HEK293 (cell line): ENCODE measurements at regions of chr11 and their contacts with region 1.

Region 1: DNA sequence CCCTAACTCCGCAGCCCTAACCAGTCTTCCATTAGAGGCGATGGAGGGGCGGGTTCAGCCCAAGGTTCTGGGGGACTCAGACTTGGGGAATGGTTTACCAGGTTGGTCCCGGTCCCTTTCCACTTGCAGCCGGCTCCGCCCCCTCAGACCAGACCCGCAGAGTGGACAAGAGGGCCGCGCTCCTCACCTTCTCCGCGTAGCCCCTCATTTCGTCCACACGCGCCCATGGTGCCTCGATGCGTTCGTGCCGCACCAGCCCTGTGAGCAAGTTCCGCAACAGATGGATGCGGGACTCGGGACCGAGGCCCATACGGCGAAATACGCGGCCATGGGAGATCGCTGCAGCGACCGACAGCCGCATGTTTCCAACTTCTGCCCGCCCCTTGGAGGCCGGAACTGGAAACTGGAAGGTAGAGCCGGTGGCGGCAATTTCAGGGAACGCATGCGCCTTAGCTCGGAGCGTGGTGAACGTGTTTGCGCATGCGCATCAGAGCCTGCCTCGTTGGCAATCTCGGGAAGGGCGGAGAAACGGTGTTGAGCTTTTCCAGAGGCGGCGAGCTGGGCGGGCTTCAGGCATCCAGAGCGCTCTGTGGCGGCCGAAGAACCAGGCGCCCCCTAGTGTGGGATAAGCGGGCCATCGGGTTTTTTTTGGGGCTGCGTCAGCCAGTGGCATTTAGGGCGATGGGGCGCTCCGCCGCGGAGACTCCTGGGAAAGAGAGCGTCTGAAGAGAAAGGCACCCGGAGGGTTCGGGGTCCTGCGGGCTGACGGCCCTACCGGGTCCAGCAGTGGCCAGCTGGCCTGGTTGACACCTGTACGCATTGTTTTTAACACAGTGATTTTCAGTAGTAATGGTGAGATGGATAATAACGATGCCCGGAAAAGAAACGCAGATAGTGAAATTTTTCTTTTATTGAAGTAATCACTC is at the start of gene MRPL17:
- H3K4me3 ChIP-seq: peak within 1 kb of the TSS; percentile 90
- H3K27ac ChIP-seq: peak within 1 kb of the TSS; percentile 70
- H3K4me1 ChIP-seq: no peaks in the 10 kb centered on the region
- CTCF ChIP-seq: peak; percentile 77

Region 2: DNA sequence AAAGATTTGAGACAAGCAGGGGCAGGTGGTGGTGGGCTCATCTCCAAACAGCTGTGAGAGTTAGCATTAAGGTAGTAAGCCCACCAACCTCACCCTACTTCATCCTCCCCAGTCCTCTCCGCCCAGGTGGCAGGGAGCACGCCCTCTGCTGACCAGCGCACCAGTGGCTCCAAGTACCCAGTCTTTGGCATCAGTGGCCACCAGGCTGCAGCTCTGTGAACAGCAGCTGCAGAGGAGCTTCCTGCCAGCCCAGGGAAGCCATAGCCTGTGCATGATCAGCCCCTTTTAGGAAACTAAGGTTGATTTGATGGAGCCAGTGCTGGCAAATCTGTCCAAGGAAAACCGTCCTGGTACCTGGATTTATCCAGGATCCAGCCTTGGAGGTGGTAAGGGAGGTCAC is 384.6 kb before region 1 on chr11:
- CTCF ChIA-PET with region 1: no interaction called
- POLR2A ChIA-PET with region 1: no interaction called
- H3K4me3 ChIP-seq: no peak overlapping the region
- H3K27ac ChIP-seq: no peak overlapping the region
- H3K4me1 ChIP-seq: no peaks in the 10 kb centered on the region
- CTCF ChIP-seq: peak; percentile 48

Region 3: GRCh38 chr11:6603287-6604080 is 79.7 kb before region 1 on chr11 and contains the starts of genes ILK and RRP8:
- CTCF ChIA-PET with region 1: interaction called, 16 read pairs
- POLR2A ChIA-PET with region 1: interaction called, 16 read pairs
- H3K4me3 ChIP-seq: peak within 1 kb of the TSS; percentile 92
- H3K27ac ChIP-seq: peak within 1 kb of the TSS; percentile 61
- H3K4me1 ChIP-seq: no peaks in the 10 kb centered on the region
- CTCF ChIP-seq: no peak; the same call in 1 of the 2 replicates

Region 4: GRCh38 chr11:6619004-6619745 is 64.0 kb before region 1 on chr11 and contains the start of gene TPP1:
- CTCF ChIA-PET with region 1: interaction called, 3 read pairs
- POLR2A ChIA-PET with region 1: interaction called, 14 read pairs
- H3K4me3 ChIP-seq: peak within 1 kb of the TSS; percentile 78
- H3K27ac ChIP-seq: no peak within 1 kb of the TSS
- H3K4me1 ChIP-seq: 0 out of 2 replicates have a peak, but pooled peaks cover 4% of the 10 kb centered on the region
- CTCF ChIP-seq: no peak

Region 5: GRCh38 chr11:6693342-6694228 is 10.4 kb after region 1 on chr11:
- CTCF ChIA-PET with region 1: interaction called, 17 read pairs
- POLR2A ChIA-PET with region 1: interaction called, 5 read pairs
- H3K4me3 ChIP-seq: no peak overlapping the region
- H3K27ac ChIP-seq: no peak overlapping the region
- H3K4me1 ChIP-seq: no peaks in the 10 kb centered on the region
- CTCF ChIP-seq: no peak

Region 6: GRCh38 chr11:6780829-6781228 is 97.6 kb after region 1 on chr11:
- CTCF ChIA-PET with region 1: no interaction called
- POLR2A ChIA-PET with region 1: no interaction called
- H3K4me3 ChIP-seq: no peak overlapping the region
- H3K27ac ChIP-seq: no peak overlapping the region
- H3K4me1 ChIP-seq: no peaks in the 10 kb centered on the region
- CTCF ChIP-seq: no peak

Region 7: DNA sequence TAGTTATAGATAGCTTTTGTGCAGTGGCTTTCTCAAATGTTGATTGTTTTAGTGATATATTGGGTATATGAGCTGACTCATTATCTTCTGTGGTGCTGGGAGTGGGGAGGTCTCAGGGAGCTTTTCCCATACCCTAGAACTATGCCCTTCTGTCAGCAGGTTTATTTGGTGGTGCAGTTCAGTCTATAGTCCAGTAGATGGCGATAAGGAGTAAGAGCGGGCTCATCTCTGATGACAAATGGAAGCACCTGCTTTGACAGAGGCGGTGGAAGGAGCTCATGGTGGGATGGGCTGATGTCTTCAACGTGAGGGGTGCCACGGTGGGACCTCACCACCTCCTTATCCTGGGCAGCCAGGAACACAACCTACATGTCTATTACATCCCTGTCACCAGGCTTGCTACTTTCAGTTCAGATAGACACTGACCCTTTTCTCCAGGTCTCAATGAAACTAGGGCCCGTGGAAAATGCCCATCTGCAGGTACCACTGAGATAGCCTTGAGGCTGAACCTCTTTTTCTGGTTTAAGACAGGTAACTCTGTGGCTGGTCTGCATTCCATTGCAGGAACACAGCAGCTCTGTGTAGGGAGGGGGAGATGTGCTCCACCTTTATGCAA is 129.3 kb after region 1 on chr11:
- CTCF ChIA-PET with region 1: no interaction called
- POLR2A ChIA-PET with region 1: no interaction called
- H3K4me3 ChIP-seq: no peak overlapping the region
- H3K27ac ChIP-seq: no peak overlapping the region
- H3K4me1 ChIP-seq: no peaks in the 10 kb centered on the region
- CTCF ChIP-seq: no peak; the same call in 1 of the 2 replicates